ENCODE measurements at regions of chr5 and their contacts with region 1.

Region 1: DNA sequence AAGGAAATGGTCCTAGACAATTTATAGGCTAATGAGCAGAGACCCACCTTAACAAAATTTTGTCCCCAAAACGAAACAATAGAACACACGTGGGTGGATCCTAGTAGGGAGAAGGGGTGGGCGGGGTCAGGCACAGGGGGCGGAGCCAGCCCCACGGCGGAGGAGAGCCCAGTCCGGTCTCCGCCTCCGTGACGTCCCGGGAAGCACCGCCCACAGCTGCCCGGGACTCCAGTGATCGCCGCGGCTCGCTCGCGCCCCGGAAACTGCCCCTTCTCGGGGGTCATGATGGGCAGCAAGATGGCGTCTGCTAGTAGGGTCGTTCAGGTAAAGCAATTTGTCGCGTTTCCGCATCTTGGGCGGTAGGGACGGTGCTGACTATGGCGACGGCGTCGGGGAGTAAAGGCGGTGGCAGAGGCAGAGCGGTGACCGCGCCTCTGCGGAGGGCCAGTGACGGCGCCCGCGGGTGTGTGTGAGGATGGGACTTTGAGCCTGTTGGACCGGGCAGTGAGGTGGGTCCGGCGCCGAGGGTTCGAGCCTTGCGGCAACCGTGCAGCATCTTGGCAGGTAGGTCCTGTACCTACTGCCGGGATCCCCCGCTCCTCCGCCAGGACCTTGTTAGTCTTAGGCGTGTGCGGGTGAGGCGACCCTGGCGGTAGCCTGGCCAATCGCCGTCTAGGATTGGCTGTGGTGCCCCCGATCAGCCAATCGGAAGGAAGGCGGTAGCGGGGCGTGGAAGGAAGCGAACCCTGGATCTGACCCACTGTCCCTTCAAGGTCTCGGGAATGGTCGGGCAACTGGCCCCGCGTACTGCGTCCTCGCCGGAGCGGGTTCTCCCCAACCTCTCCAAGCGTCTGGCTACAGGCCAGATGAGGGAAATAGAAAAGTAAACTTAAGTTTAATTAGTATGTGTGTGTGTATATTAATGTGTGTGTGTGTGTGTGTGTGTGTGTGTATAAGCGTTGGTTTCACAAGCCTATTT is 16.8 kb upstream of the CDK7 start:
- DNase-seq: peak; percentile 82 to 97 (median 91)
- ATAC-seq: peak; percentile 91 to 96 (median 95)
- H3K4me3 ChIP-seq: peak overlapping the region; percentile 90 to 97
- H3K4me3 Mint-ChIP-seq: peak overlapping the region; percentile 98 to 99 (median 98)
- H3K27ac ChIP-seq: peak overlapping the region; percentile 83
- H3K27ac Mint-ChIP-seq: peak overlapping the region; percentile 95 to 98
- H3K4me1 ChIP-seq: peaks cover 7 to 10% of the 10 kb centered on the region in 2 experiments
- H3K4me1 Mint-ChIP-seq: peaks cover 18 to 26% (median 20%) of the 10 kb centered on the region in 3 donors
- H3K27me3 ChIP-seq: no peaks in the 10 kb centered on the region
- H3K27me3 Mint-ChIP-seq: no peaks in the 10 kb centered on the region

Region 2: DNA sequence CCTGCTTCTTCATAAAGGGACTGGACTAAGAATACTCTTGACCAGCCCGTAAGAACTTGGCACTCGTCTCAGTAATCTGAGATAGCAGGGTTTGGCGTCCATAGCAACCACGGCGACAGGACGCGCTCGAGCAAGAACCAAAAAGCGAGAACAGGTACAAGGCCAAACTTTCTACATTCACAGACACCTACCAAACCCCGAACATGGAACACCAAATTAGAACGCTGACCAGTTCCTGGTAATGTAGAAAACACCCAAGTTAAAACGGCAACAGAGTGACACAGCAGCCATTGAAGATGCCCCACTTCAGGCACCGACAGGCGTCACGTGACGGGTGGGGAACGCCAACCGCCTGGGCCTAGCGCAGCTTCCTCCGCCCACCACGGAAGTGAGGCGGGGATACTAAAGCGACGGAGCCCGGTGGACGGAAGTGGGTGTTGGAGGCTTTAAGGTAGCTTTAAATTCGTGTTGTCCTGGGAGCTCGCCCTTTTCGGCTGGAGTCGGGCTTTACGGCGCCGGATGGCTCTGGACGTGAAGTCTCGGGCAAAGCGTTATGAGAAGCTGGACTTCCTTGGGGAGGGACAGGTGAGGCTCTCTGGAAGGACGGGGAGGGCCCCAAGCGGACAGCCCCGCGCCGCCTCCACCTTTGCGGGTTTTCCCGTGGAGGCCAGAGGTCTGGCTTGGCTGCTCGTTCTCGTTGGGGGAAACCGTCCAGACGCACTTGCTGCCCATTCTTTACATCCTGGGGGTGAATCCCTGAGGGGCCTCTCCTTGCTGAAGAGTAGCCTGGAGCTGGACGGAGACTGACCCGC is 16.8 kb after region 1 on chr5 and contains the start of gene CDK7:
- CTCF ChIA-PET with region 1: interaction called, 3 to 18 read pairs
- POLR2A ChIA-PET with region 1: interaction called, 5 to 7 read pairs
- DNase-seq: peak; percentile 79 to 97 (median 91)
- ATAC-seq: peak; percentile 100
- H3K4me3 ChIP-seq: peak within 1 kb of the TSS; percentile 96 to 98
- H3K4me3 Mint-ChIP-seq: peak within 1 kb of the TSS; percentile 91 to 96 (median 95)
- H3K27ac ChIP-seq: peak within 1 kb of the TSS; percentile 73
- H3K27ac Mint-ChIP-seq: peak within 1 kb of the TSS; percentile 79 to 95
- H3K4me1 ChIP-seq: peaks cover 14 to 27% of the 10 kb centered on the region in 2 experiments
- H3K4me1 Mint-ChIP-seq: peaks cover 40 to 41% (median 40%) of the 10 kb centered on the region in 3 donors
- H3K27me3 ChIP-seq: no peaks in the 10 kb centered on the region
- H3K27me3 Mint-ChIP-seq: no peaks in the 10 kb centered on the region
- total RNA-seq, gene CDK7: 21.4 to 26.5 (median 22.0) TPM

Region 3: GRCh38 chr5:69285448-69286116 is 67.7 kb after region 1 on chr5:
- CTCF ChIA-PET with region 1: no interaction called
- POLR2A ChIA-PET with region 1: interaction called in 1 of 2 experiments, 10 read pairs
- DNase-seq: no peak
- ATAC-seq: no peak
- H3K4me3 ChIP-seq: no peak overlapping the region
- H3K4me3 Mint-ChIP-seq: no peak overlapping the region
- H3K27ac ChIP-seq: no peak overlapping the region
- H3K27ac Mint-ChIP-seq: no peak overlapping the region
- H3K4me1 ChIP-seq: no peaks in the 10 kb centered on the region
- H3K4me1 Mint-ChIP-seq: no peaks in the 10 kb centered on the region
- H3K27me3 ChIP-seq: no peaks in the 10 kb centered on the region
- H3K27me3 Mint-ChIP-seq: no peaks in the 10 kb centered on the region